Heart right ventricle (tissue), 16 donors: ENCODE measurements at regions of chr18 and their contacts with region 1.

Region 1: GRCh38 chr18:46293761-46294228 is 189.6 kb downstream of the HAUS1 start:
- DNase-seq: no peak
- ATAC-seq: no peak
- H3K4me3 ChIP-seq: no peak overlapping the region
- H3K27ac ChIP-seq: no peak overlapping the region
- H3K4me1 ChIP-seq: peaks cover 0 to 18% (median 0%) of the 10 kb centered on the region in 9 donors
- H3K27me3 ChIP-seq: no peaks in the 10 kb centered on the region
- CTCF ChIP-seq: no peak

Region 2: GRCh38 chr18:46411867-46412690 is 118.3 kb after region 1 on chr18:
- intact Hi-C with region 1: loop called in 1 of 10 experiments (anchors 10 kb)
- DNase-seq: peak; percentile 40 to 63
- ATAC-seq: peak; percentile 68 to 88 (median 82)
- H3K4me3 ChIP-seq: peak overlapping the region in 1 of 10 donors; percentile 9
- H3K27ac ChIP-seq: peak overlapping the region; percentile 61 to 94 (median 86)
- H3K4me1 ChIP-seq: peaks cover 5 to 90% (median 55%) of the 10 kb centered on the region in 9 donors
- H3K27me3 ChIP-seq: no peaks in the 10 kb centered on the region
- CTCF ChIP-seq: no peak

Region 3: GRCh38 chr18:46474487-46475389 is 180.9 kb after region 1 on chr18:
- intact Hi-C with region 1: loop called in 1 of 10 experiments (anchors 10 kb)
- DNase-seq: no peak
- ATAC-seq: peak in 6 of 8 donors; percentile 9 to 49 (median 33)
- H3K4me3 ChIP-seq: no peak overlapping the region
- H3K27ac ChIP-seq: no peak overlapping the region
- H3K4me1 ChIP-seq: peaks cover 0 to 11% (median 0%) of the 10 kb centered on the region in 9 donors
- H3K27me3 ChIP-seq: no peaks in the 10 kb centered on the region
- CTCF ChIP-seq: no peak